Activated B cell treated with CpG ODN at 0.5 μM for 24 hours (primary cell): ENCODE measurements at regions of chr3 and their contacts with region 1.

Region 1: GRCh38 chr3:33113772-33114621 is at the start of gene CRTAP:
- DNase-seq: peak; percentile 91
- ATAC-seq: peak; percentile 83
- H3K4me3 Mint-ChIP-seq: peak within 1 kb of the TSS; percentile 87
- H3K27ac Mint-ChIP-seq: peak within 1 kb of the TSS; percentile 85
- H3K4me1 Mint-ChIP-seq: peaks cover 50% of the 10 kb centered on the region
- H3K27me3 Mint-ChIP-seq: no peaks in the 10 kb centered on the region
- CTCF ChIP-seq: no peak
- total RNA-seq, gene CRTAP: 36.5 and 36.6 TPM in 2 replicates

Region 2: GRCh38 chr3:32781210-32781968 is 332.6 kb before region 1 on chr3:
- CTCF ChIA-PET with region 1: no interaction called
- POLR2A ChIA-PET with region 1: no interaction called
- intact Hi-C with region 1: loop called (anchors 10 kb)
- DNase-seq: peak; percentile 71
- ATAC-seq: peak; percentile 91
- H3K4me3 Mint-ChIP-seq: peak overlapping the region; percentile 90
- H3K27ac Mint-ChIP-seq: no peak overlapping the region
- H3K4me1 Mint-ChIP-seq: peaks cover 5% of the 10 kb centered on the region
- H3K27me3 Mint-ChIP-seq: no peaks in the 10 kb centered on the region
- CTCF ChIP-seq: peak; percentile 80

Region 3: GRCh38 chr3:33096093-33096868 is 17.7 kb before region 1 on chr3:
- CTCF ChIA-PET with region 1: no interaction called
- POLR2A ChIA-PET with region 1: interaction called, 31 read pairs
- intact Hi-C with region 1: loop called (anchors 1 kb)
- DNase-seq: peak; percentile 58
- ATAC-seq: peak; percentile 68
- H3K4me3 Mint-ChIP-seq: peak overlapping the region; percentile 98
- H3K27ac Mint-ChIP-seq: peak overlapping the region; percentile 94
- H3K4me1 Mint-ChIP-seq: peaks cover 41% of the 10 kb centered on the region
- H3K27me3 Mint-ChIP-seq: no peaks in the 10 kb centered on the region
- CTCF ChIP-seq: no peak

Region 4: GRCh38 chr3:33139996-33140395 is 26.0 kb after region 1 on chr3:
- CTCF ChIA-PET with region 1: no interaction called
- POLR2A ChIA-PET with region 1: no interaction called
- intact Hi-C with region 1: loop called (anchors 2 kb)
- DNase-seq: no peak
- ATAC-seq: no peak
- H3K4me3 Mint-ChIP-seq: no peak overlapping the region
- H3K27ac Mint-ChIP-seq: no peak overlapping the region
- H3K4me1 Mint-ChIP-seq: peaks cover 14% of the 10 kb centered on the region
- H3K27me3 Mint-ChIP-seq: no peaks in the 10 kb centered on the region
- CTCF ChIP-seq: no peak

Region 5: GRCh38 chr3:33749546-33750210 is 635.7 kb after region 1 on chr3:
- CTCF ChIA-PET with region 1: no interaction called
- POLR2A ChIA-PET with region 1: no interaction called
- intact Hi-C with region 1: no loop called
- DNase-seq: no peak
- ATAC-seq: no peak
- H3K4me3 Mint-ChIP-seq: no peak overlapping the region
- H3K27ac Mint-ChIP-seq: no peak overlapping the region
- H3K4me1 Mint-ChIP-seq: peaks cover 3% of the 10 kb centered on the region
- H3K27me3 Mint-ChIP-seq: peaks cover 6% of the 10 kb centered on the region
- CTCF ChIP-seq: no peak

Region 6: GRCh38 chr3:33798411-33799201 is 684.6 kb after region 1 on chr3 and contains the start of gene PDCD6IP:
- CTCF ChIA-PET with region 1: no interaction called
- POLR2A ChIA-PET with region 1: no interaction called
- intact Hi-C with region 1: loop called (anchors 5 kb)
- DNase-seq: peak; percentile 93
- ATAC-seq: peak; percentile 84
- H3K4me3 Mint-ChIP-seq: peak within 1 kb of the TSS; percentile 99
- H3K27ac Mint-ChIP-seq: peak within 1 kb of the TSS; percentile 95
- H3K4me1 Mint-ChIP-seq: peaks cover 52% of the 10 kb centered on the region
- H3K27me3 Mint-ChIP-seq: no peaks in the 10 kb centered on the region
- CTCF ChIP-seq: no peak
- total RNA-seq, gene PDCD6IP: 216 and 237 TPM in 2 replicates